ENCODE measurements at regions of chr12 and their contacts with region 1.

Region 1: GRCh38 chr12:65602610-65603295 is 221.5 kb upstream of the HMGA2 start:
- DNase-seq: peak; percentile 87
- H3K4me3 ChIP-seq: peak overlapping the region; percentile 59
- H3K27ac ChIP-seq: peak overlapping the region; percentile 83
- H3K27me3 ChIP-seq: no peaks in the 10 kb centered on the region
- CTCF ChIP-seq: peak; percentile 86

Region 2: DNA sequence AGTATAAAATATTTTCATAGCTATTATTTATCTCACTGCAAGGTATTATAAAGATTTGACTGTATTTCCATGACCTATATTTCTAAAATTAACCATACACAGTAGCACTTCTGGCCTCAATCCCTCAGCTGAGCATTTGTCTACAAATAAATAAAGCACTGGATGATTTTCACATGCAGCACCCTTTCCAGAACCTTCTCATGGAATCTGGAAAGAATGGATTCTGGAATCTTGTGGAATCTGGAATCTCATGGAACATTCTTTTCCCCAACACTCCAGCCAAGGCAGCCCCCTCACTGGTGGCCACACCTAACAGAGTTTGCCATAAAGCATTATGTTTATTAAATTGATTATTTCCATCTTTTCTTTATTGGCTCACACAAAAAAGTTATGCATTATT is 125.0 kb before region 1 on chr12:
- CTCF ChIA-PET with region 1: no interaction called
- POLR2A ChIA-PET with region 1: no interaction called
- DNase-seq: no peak
- H3K4me3 ChIP-seq: no peak overlapping the region
- H3K27ac ChIP-seq: no peak overlapping the region
- H3K27me3 ChIP-seq: no peaks in the 10 kb centered on the region
- CTCF ChIP-seq: no peak

Region 3: DNA sequence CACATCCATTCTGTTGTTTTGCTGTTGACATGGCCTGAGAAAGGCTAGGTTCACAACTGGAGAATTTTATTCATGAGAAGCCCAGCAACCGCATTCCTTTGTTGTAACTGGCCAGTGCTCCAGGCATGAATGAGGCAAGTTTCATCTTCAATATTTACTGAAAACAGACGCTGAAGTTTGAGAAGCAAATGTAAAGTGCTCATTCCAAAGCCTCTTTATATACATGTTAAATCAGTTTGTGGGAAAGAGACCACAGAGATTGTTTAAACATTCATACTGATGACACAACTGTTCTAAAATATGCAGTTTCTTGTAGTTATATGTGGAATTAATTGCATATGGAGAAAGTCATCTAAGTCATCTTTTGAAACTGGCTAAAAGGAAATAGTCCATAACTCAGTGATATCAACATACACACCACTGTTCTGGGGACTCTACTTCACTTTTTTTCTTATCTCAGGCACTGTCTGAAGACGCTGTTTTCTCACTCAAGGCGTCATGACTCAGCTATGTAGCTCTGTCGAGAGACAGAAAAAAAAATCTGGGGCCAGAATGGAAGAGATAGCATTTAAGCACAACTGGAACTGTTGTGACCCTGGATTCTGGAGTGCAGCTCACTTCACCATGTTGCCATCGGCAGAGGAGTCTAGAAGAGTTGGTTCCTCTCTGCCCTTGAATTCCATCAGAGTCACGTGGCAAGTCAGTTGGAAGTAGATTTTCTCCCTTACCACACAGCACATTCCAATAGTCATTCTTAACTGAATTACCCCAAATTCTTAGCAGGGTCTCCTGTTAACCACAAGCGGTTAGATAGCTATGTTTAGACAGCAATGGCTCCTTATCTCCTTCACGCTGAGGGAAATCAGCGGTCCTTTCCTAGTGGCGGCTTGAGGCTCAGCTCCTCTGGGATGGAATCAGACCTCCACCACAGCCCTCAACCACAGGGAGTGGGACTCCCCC is 36.9 kb before region 1 on chr12:
- CTCF ChIA-PET with region 1: interaction called, 12 read pairs
- POLR2A ChIA-PET with region 1: interaction called, 13 read pairs
- DNase-seq: peak; percentile 96
- H3K4me3 ChIP-seq: peak overlapping the region; percentile 45
- H3K27ac ChIP-seq: peak overlapping the region; percentile 97
- H3K27me3 ChIP-seq: no peaks in the 10 kb centered on the region
- CTCF ChIP-seq: peak; percentile 32

Region 4: GRCh38 chr12:65620046-65620445 is 17.3 kb after region 1 on chr12:
- CTCF ChIA-PET with region 1: interaction called, 16 read pairs
- POLR2A ChIA-PET with region 1: interaction called, 5 read pairs
- DNase-seq: no peak
- H3K4me3 ChIP-seq: no peak overlapping the region
- H3K27ac ChIP-seq: no peak overlapping the region
- H3K27me3 ChIP-seq: no peaks in the 10 kb centered on the region
- CTCF ChIP-seq: no peak

Region 5: DNA sequence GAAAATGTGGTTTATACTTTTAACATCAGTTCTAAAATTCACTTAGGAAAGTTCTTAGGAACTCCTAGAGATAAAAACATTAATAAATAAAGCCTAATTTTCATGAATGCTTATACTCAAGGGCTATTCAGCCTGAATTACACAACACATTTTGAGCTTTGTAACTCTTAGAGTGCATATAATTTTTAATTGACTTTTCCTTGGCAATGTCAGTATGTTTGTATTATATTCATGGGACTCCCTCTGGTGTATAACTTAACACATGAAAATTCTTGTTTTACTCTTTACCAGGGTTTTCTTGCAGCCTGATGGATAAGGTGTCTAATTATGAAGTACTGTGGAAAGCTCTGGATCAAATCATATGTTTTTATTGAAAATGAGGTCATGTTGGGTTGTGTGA is 71.0 kb after region 1 on chr12:
- CTCF ChIA-PET with region 1: interaction called, 16 read pairs
- POLR2A ChIA-PET with region 1: interaction called, 6 read pairs
- DNase-seq: no peak
- H3K4me3 ChIP-seq: no peak overlapping the region
- H3K27ac ChIP-seq: no peak overlapping the region
- H3K27me3 ChIP-seq: no peaks in the 10 kb centered on the region
- CTCF ChIP-seq: peak; percentile 29

Measured in AG04450 (cell line).